HCT116 (cell line): ENCODE measurements at regions of chr6 and their contacts with region 1.

Region 1: GRCh38 chr6:112311950-112312547 is 35.1 kb upstream of the RFPL4B start:
- DNase-seq: no peak
- ATAC-seq: peak; percentile 53; the same call in 1 of the 2 replicates
- H3K4me3 ChIP-seq: no peak overlapping the region
- H3K27ac ChIP-seq: no peak overlapping the region
- H3K4me1 ChIP-seq: no peaks in the 10 kb centered on the region
- H3K27me3 ChIP-seq: no peaks in the 10 kb centered on the region
- CTCF ChIP-seq: peak; percentile 45 to 85 (median 72)
- POLR2A ChIP-seq: no peak
- RAD21 ChIP-seq: peak; percentile 82

Region 2: GRCh38 chr6:112237595-112237994 is 74.5 kb before region 1 on chr6:
- CTCF ChIA-PET with region 1: no interaction called
- POLR2A ChIA-PET with region 1: no interaction called
- RAD21 ChIA-PET with region 1: no interaction called
- intact Hi-C with region 1: no loop called
- DNase-seq: no peak
- ATAC-seq: no peak
- H3K4me3 ChIP-seq: no peak overlapping the region
- H3K27ac ChIP-seq: no peak overlapping the region
- H3K4me1 ChIP-seq: peaks cover 5 to 9% of the 10 kb centered on the region in 2 experiments; a peak in 2 of 4 replicates
- H3K27me3 ChIP-seq: no peaks in the 10 kb centered on the region
- CTCF ChIP-seq: no peak
- POLR2A ChIP-seq: no peak
- RAD21 ChIP-seq: no peak

Region 3: DNA sequence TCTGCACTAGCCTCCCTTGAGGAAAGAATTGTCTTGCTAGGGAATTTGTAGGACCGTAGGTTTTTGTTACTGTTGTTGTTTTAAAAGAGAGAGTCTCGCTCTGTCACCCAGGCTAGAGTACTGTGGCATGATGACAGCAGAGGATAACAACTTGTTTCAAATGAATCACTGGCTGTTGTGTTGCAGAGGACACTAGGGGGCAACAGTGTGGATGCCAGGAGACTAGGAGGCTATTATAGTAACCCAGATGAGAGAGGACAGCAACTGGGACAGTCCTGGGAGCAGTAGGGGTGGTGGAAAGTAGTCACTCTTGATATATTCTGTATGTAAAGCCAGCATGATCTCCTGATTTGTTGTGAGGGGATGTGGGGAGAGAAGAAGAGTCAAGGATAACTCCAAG is 15.9 kb before region 1 on chr6:
- CTCF ChIA-PET with region 1: interaction called, 11 read pairs
- POLR2A ChIA-PET with region 1: no interaction called
- RAD21 ChIA-PET with region 1: no interaction called
- intact Hi-C with region 1: no loop called
- DNase-seq: peak; percentile 27
- ATAC-seq: peak; percentile 87
- H3K4me3 ChIP-seq: no peak overlapping the region
- H3K27ac ChIP-seq: no peak overlapping the region
- H3K4me1 ChIP-seq: peaks cover 0 to 21% of the 10 kb centered on the region in 2 experiments; a peak in 2 of 4 replicates
- H3K27me3 ChIP-seq: no peaks in the 10 kb centered on the region
- CTCF ChIP-seq: peak; percentile 36 to 74 (median 71); a peak in 5 of 6 replicates
- POLR2A ChIP-seq: no peak
- RAD21 ChIP-seq: peak; percentile 45